Transverse colon (tissue), 4 donors: ENCODE measurements at regions of chr11 and their contacts with region 1.

Region 1: DNA sequence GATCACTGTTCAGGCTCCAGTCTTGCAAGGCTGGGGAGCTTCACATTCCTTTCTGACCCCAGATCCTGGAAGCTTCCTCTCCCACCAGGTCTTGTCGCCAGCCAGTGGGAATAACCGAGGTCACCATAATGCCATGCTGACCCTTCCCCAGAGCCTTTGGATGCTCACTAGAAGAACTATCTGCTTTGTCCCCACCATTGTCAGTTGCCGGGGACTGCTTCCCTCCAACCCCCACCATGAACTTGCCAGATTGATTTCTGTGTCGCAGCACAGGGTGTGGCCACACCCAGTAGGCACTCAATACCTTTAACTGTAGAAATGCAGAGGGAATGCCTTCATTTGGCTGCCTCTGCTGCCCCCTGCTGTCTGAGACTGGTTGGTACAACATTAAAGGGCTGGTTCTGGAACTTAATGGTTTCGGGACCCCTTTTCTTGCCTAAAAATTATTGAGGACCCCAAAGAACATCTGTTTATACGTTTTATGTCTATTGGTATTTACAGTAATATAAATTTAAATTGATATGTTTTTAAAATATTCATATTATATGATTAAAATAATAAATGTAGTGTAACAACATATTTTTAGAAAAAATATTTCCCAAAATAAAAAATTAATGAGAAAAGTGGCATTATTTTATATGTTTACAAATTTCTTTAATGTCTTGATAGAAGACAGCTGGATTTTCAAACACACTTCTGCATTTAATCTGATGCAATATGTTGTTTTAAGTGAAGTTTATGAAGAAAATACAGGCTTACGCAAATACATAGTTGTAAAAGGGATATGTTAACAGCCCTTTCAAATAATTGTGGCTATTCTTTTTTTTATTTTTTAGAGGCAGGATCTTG is 6.7 kb upstream of the GDPD5 start:
- DNase-seq: peak; percentile 80
- H3K4me3 ChIP-seq: no peak overlapping the region
- H3K27ac ChIP-seq: no peak overlapping the region
- H3K4me1 ChIP-seq: peaks cover 0 to 10% (median 2%) of the 10 kb centered on the region in 4 donors
- H3K27me3 ChIP-seq: no peaks in the 10 kb centered on the region
- CTCF ChIP-seq: peak; percentile 92 to 96 (median 93)
- EP300 ChIP-seq: no peak
- POLR2A ChIP-seq: no peak

Region 2: GRCh38 chr11:75406338-75406777 is 126.1 kb before region 1 on chr11:
- in situ Hi-C with region 1: no loop called
- intact Hi-C with region 1: no loop called
- DNase-seq: no peak
- H3K4me3 ChIP-seq: no peak overlapping the region
- H3K27ac ChIP-seq: no peak overlapping the region
- H3K4me1 ChIP-seq: peaks cover 5 to 10% (median 7%) of the 10 kb centered on the region in 4 donors
- H3K27me3 ChIP-seq: no peaks in the 10 kb centered on the region
- CTCF ChIP-seq: no peak
- EP300 ChIP-seq: no peak
- POLR2A ChIP-seq: no peak

Region 3: DNA sequence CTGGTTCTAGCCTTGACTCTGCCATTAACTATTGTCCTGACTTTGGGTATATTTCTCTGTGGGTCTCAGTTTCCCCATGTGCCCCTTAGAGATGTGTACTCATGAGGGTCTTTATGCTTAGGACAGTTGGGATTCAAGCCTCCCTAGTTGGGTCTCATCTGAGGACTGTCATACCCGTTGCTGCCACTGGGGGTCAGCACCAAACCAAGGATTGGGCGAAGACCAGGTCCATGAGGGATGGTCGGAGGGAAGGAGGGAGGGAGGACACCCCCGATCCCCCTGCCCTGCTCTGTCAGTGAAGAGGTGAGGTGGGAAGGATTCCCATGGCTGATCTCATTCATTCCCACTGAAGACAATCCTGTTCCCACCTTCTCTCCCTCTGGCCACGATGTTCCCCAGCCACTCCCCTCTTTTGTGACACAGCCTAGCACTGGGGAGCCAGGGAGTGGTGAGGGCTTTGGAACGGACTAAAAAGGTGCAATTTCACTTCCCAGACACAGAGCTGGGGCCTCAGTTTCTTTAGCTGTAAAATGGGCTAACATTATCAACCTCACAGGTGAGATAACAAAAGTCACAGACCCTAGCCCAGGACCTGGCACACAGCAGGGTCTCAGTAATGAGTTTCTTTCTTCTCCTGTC is 87.0 kb before region 1 on chr11:
- in situ Hi-C with region 1: loop called (anchors 5 to 25 kb)
- intact Hi-C with region 1: loop called (anchors 2 kb)
- DNase-seq: peak; percentile 77
- H3K4me3 ChIP-seq: no peak overlapping the region
- H3K27ac ChIP-seq: no peak overlapping the region
- H3K4me1 ChIP-seq: no peaks in the 10 kb centered on the region
- H3K27me3 ChIP-seq: no peaks in the 10 kb centered on the region
- CTCF ChIP-seq: peak; percentile 96 to 98 (median 96)
- EP300 ChIP-seq: no peak
- POLR2A ChIP-seq: no peak

Region 4: GRCh38 chr11:75547580-75548058 is 15.2 kb after region 1 on chr11:
- in situ Hi-C with region 1: no loop called
- intact Hi-C with region 1: no loop called
- DNase-seq: peak; percentile 72
- H3K4me3 ChIP-seq: no peak overlapping the region
- H3K27ac ChIP-seq: peak overlapping the region in 1 of 4 donors; percentile 14
- H3K4me1 ChIP-seq: peaks cover 0 to 3% (median 1%) of the 10 kb centered on the region in 4 donors
- H3K27me3 ChIP-seq: no peaks in the 10 kb centered on the region
- CTCF ChIP-seq: peak; percentile 77 to 90 (median 84)
- EP300 ChIP-seq: no peak
- POLR2A ChIP-seq: no peak

Region 5: DNA sequence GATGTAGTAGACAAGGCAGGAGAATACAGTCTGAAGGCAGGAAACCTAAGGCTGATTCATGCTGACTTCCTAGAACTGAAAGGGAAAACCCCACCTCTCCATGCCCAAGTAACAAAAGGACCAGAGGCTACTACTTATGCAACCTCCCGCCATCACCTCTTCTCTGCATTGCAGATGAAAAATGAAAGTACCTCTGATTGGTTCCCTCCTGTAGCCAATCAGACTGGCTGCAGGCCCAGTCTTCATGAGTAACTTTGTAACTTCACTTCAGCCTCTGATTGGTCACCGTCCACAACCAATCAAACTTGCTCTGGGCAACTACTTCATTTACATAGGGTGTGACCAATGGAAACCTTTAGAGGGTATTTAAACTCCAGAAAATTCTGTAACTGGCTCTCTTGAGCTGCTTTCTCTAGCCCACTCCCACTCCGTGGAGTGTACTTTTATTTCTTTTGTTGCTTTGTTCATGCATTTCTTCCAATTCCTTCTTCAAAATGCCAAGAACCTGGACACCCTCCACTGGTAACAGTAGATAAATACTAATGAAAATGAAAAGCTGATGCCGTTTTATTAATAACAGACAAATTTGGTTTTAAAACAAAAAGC is 141.7 kb after region 1 on chr11:
- in situ Hi-C with region 1: no loop called
- intact Hi-C with region 1: no loop called
- DNase-seq: no peak
- H3K4me3 ChIP-seq: no peak overlapping the region
- H3K27ac ChIP-seq: no peak overlapping the region
- H3K4me1 ChIP-seq: peaks cover 0 to under 1% (median under 1%) of the 10 kb centered on the region in 4 donors
- H3K27me3 ChIP-seq: peaks cover 66% of the 10 kb centered on the region
- CTCF ChIP-seq: no peak
- EP300 ChIP-seq: no peak
- POLR2A ChIP-seq: no peak